Right ventricle myocardium inferior (tissue), 1 donor: ENCODE measurements at regions of chr20 and their contacts with region 1.

Region 1: GRCh38 chr20:50663095-50663850 is 28.1 kb downstream of the RIPOR3 start:
- DNase-seq: no peak
- ATAC-seq: no peak

Region 2: GRCh38 chr20:50645253-50646118 is 17.8 kb before region 1 on chr20:
- intact Hi-C with region 1: no loop called
- DNase-seq: peak; percentile 81
- ATAC-seq: peak; percentile 71

Region 3: GRCh38 chr20:50724851-50725721 is 61.8 kb after region 1 on chr20:
- intact Hi-C with region 1: loop called (anchors 5 kb)
- DNase-seq: peak; percentile 73
- ATAC-seq: peak; percentile 70